Posterior cingulate gyrus (tissue), 11 donors: ENCODE measurements at regions of chr2 and their contacts with region 1.

Region 1: GRCh38 chr2:37832590-37833197 is 92.4 kb upstream of the RMDN2 start:
- DNase-seq: peak; percentile 55 to 96 (median 90)

Region 2: DNA sequence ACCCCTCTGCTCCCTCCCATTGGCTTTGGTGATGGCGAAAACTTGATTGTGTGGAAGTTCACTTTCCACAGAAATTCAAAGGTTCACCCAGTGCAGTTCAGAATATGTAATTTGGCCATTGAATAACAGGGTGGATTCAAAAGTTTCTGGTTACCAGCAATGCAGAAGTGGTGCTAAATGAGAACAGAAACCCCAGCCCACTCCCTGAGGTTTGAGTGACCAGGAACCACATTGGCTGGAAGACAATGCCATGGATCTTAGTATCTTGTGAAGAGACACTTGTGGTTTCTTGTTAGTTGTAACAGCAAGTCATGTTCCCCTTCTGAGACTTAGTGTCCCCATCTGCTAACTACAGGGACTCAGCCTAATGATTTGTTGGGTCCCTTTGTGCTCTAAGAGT is 438.4 kb before region 1 on chr2:
- intact Hi-C with region 1: loop called (anchors 1 kb)
- DNase-seq: no peak

Region 3: GRCh38 chr2:37414470-37414949 is 418.2 kb before region 1 on chr2:
- intact Hi-C with region 1: loop called (anchors 1 kb)
- DNase-seq: no peak

Region 4: GRCh38 chr2:37698931-37699481 is 133.7 kb before region 1 on chr2:
- intact Hi-C with region 1: no loop called
- DNase-seq: no peak

Region 5: GRCh38 chr2:37730037-37730818 is 102.5 kb before region 1 on chr2:
- intact Hi-C with region 1: no loop called
- DNase-seq: no peak

Region 6: DNA sequence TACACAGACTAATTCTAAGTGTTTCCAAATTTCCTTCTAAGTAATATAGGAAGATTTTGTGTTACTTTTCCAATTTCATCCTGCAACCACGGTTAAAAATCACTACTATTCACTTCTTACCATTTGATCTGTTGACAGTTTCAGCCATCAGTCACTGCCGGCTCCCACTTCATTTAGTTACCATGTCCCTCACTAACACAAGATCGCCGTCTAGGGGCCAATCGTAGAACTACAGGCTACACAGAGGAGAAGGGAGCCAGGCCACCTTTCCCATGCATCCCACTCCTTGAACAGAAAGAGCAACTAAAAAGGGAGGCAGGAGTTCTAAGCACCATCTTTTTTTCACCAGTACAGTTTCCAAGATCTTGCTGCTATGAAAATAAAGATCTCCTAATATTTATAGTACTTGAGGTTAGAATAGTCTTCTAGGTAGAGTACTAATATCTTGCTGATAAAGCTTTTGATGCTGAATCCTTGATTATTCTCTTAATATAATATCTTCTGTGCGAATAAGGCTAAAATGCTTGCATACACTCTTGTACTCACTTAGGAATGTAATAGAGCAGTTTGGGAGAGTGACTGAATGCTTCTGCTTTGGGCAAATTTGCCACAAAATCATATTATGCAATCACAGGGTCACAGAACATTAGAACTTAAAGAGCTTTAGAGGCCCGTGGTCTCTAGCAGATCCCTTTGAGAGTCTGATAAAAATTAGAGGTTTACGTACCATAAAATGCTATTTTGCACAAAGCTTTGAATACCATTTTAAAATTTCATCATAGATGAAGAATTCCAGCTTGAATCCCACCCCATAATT is 282.7 kb after region 1 on chr2:
- intact Hi-C with region 1: no loop called
- DNase-seq: peak in 6 of 10 donors; percentile 37 to 83 (median 57)